ENCODE measurements at regions of chr12 and their contacts with region 1.

Region 1: DNA sequence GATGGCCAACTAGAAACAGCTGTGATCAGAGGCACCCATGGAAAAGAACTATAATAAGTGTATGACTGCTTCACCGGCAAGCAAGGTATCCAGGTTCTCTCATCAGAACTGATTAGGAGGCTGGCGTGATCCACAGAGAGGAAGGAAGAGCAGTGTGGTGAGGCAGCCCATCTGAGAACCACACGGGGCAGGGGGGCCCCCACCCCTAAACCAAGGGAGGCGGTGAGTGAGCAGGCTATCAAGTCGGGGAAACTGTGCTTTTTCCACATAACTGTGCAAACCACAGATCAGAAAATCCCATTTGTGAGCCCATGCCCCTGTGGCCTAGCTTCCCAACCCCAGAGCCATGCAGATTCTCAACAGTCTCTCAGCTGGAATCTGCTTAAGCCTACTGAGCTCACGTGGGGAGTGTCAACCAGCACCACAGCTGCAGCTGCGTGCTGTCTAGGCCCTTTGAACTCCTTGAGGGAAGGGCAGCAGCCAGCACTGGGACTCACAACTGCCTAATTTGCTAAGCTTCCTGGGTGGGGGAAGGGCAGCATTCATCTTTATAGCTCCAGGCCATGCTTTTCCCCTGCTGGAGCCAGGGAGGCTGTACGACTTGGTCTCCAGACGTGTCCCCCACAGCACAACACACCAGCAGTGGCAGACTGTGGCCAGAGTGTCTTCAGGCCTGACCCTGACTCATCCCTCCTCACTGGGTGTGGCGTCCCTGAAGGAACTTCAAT is 444.4 kb upstream of the ATP2B1 start:
- DNase-seq: no peak
- ATAC-seq: no peak
- H3K4me3 ChIP-seq: no peak overlapping the region
- H3K27ac ChIP-seq: no peak overlapping the region
- H3K4me1 ChIP-seq: no peaks in the 10 kb centered on the region
- H3K27me3 ChIP-seq: no peaks in the 10 kb centered on the region
- CTCF ChIP-seq: no peak
- EP300 ChIP-seq: no peak
- POLR2A ChIP-seq: no peak
- RAD21 ChIP-seq: no peak

Region 2: DNA sequence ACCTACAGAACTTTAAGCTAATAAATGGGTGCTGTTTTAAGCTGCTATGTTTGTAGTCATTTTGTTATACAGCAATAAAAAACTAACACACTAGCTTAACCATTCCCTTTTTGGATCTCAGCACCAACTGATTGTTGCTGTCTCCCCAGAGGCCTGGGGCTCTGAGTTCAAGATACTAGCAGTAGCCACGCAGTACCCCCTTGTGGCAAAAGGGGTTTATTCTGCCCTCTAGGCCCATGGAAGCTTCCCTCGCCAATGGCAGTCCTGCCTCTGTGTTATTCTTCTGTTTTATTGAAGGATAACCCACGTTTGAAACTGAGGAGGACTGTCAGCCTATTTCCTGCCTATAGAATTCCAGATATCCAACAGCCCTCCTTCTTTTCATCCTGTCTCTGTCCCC is 10.9 kb after region 1 on chr12:
- CTCF ChIA-PET with region 1: interaction called, 10 read pairs
- POLR2A ChIA-PET with region 1: no interaction called
- RAD21 ChIA-PET with region 1: interaction called, 3 read pairs
- SMC1A ChIA-PET with region 1: no interaction called
- in situ Hi-C with region 1: no loop called
- intact Hi-C with region 1: no loop called
- DNase-seq: no peak
- ATAC-seq: peak; percentile 81
- H3K4me3 ChIP-seq: no peak overlapping the region
- H3K27ac ChIP-seq: no peak overlapping the region
- H3K4me1 ChIP-seq: no peaks in the 10 kb centered on the region
- H3K27me3 ChIP-seq: no peaks in the 10 kb centered on the region
- CTCF ChIP-seq: peak in 2 of 3 experiments; percentile 23 to 24; a peak in 2 of 6 replicates
- EP300 ChIP-seq: no peak
- POLR2A ChIP-seq: no peak
- RAD21 ChIP-seq: peak; percentile 36; the same call in 1 of the 2 replicates

Region 3: GRCh38 chr12:90174198-90174510 is 21.1 kb after region 1 on chr12:
- CTCF ChIA-PET with region 1: no interaction called
- POLR2A ChIA-PET with region 1: no interaction called
- RAD21 ChIA-PET with region 1: no interaction called
- SMC1A ChIA-PET with region 1: interaction called, 5 read pairs
- in situ Hi-C with region 1: no loop called
- intact Hi-C with region 1: loop called (anchors 2 kb)
- DNase-seq: peak; percentile 2
- ATAC-seq: peak; percentile 50
- H3K4me3 ChIP-seq: no peak overlapping the region
- H3K27ac ChIP-seq: no peak overlapping the region
- H3K4me1 ChIP-seq: no peaks in the 10 kb centered on the region
- H3K27me3 ChIP-seq: no peaks in the 10 kb centered on the region
- CTCF ChIP-seq: no peak
- EP300 ChIP-seq: no peak
- POLR2A ChIP-seq: no peak
- RAD21 ChIP-seq: no peak